ENCODE measurements at regions of chr4 and their contacts with region 1.

Region 1: DNA sequence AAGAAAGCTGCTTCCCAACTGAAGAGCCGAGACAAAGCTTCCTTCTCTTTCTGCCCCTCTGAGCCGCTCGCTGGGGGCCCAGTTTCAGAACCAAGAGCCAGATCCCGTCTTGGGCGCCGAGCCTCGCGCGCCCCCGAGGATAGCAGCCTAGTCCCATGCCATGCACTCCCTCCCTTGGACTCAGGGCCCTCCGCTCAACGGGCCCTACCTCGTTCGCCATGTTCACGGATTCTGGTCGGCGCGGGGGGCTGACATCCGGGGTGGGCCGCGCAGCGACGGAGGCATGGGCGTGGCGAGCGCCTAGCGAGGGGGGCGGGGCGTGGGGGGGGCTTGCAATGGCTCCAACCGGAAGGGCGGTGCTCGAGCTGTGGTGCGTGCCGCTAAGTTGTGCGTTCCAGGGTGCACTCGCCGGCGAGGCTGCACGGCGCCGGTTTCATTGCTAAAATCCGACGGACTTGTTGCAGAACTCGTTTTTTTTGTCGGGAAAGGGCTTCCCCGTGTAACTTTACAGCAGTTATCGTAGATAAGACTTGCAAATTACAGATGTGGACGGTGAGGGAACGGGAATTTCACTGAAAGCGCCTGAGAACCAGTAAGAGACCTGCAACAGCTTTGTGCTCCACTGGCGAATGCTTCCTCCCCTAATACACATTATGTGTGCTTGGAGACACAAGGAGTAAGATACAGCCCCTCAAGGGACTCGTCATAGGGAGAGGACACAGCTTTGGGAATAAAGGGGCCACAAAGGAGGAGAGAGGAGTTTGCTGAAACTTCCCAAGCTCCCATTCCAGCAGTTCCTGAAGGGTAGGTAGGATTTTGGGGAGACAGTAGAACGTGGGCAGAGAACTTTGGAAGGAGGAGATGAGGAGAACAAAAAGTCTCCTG is at the start of gene ADH5:
- DNase-seq: peak; percentile 92
- H3K4me3 Mint-ChIP-seq: peak within 1 kb of the TSS; percentile 96
- H3K27ac Mint-ChIP-seq: peak within 1 kb of the TSS; percentile 95
- H3K4me1 Mint-ChIP-seq: peaks cover 32% of the 10 kb centered on the region
- H3K27me3 Mint-ChIP-seq: no peaks in the 10 kb centered on the region
- total RNA-seq, gene ADH5: 94.3 to 99.9 TPM

Region 2: GRCh38 chr4:99074816-99075215 is 13.9 kb before region 1 on chr4:
- CTCF ChIA-PET with region 1: no interaction called
- intact Hi-C with region 1: no loop called
- DNase-seq: no peak
- H3K4me3 Mint-ChIP-seq: no peak overlapping the region
- H3K27ac Mint-ChIP-seq: no peak overlapping the region
- H3K4me1 Mint-ChIP-seq: no peaks in the 10 kb centered on the region
- H3K27me3 Mint-ChIP-seq: no peaks in the 10 kb centered on the region

Region 3: DNA sequence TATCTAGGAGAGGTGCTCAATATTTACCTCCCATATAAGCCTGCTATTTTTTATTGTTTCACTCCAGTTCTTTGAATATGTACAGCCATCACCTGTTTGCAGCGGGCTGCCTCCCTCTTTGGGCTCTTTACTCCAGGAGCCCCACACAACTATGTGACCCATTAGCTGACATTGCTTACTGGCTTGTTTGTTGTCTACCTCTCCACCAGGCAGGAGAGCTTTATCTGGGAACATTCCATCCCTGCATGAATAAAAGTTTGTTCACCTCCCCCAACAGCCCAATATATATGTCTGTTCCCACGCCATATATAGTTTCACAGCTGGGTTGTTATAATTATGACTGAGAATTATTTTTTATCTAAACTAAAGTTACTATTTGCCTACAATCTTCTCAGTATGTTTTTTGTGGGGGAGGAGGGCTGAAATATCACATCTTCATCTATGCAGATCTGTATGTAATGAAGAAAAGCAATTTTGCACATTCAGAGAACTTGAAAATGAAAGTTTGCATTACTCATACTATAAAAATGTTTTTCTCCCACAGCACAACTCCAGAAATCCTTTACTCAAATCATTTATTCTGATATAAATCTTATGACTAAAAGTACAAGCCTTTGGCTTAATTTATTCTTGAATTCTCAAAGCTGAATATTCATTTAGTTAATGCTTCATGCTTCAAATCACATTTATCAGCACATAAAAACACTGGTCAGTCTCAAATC is 666.7 kb after region 1 on chr4:
- CTCF ChIA-PET with region 1: no interaction called
- intact Hi-C with region 1: loop called (anchors 5 kb)
- DNase-seq: no peak
- H3K4me3 Mint-ChIP-seq: no peak overlapping the region
- H3K27ac Mint-ChIP-seq: no peak overlapping the region
- H3K4me1 Mint-ChIP-seq: peaks cover 24% of the 10 kb centered on the region
- H3K27me3 Mint-ChIP-seq: peaks cover 28% of the 10 kb centered on the region

Measured in activated naive CD4-positive, alpha-beta T cell treated with anti-CD3 and anti-CD28 coated beads for 36 hours (primary cell).